PC-9 (cell line): ENCODE measurements at regions of chr1 and their contacts with region 1.

Region 1: DNA sequence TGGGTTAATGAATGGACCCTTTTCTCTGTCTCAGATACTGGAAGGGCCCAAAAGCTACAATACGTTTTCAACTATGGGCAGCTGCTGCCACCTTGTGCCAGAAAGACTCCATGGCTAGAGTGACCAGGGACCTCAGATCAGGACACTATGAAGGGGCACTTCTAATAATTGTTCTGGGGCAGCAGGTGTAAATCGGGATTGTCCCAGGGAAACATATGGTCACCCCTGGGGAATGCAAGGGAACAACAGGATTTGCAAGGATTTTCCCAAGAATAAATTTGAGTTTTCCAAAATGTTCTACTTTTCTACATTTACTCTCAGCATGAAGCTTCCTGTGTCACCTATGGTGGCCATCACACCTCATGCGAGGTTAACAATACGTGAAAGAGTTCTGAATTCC is 12.0 kb upstream of the FCAMR start:
- DNase-seq: peak; percentile 46 to 51
- H3K4me3 ChIP-seq: no peak overlapping the region
- H3K27ac ChIP-seq: no peak overlapping the region
- H3K4me1 ChIP-seq: no peaks in the 10 kb centered on the region
- H3K27me3 ChIP-seq: no peaks in the 10 kb centered on the region
- CTCF ChIP-seq: peak; percentile 85

Region 2: DNA sequence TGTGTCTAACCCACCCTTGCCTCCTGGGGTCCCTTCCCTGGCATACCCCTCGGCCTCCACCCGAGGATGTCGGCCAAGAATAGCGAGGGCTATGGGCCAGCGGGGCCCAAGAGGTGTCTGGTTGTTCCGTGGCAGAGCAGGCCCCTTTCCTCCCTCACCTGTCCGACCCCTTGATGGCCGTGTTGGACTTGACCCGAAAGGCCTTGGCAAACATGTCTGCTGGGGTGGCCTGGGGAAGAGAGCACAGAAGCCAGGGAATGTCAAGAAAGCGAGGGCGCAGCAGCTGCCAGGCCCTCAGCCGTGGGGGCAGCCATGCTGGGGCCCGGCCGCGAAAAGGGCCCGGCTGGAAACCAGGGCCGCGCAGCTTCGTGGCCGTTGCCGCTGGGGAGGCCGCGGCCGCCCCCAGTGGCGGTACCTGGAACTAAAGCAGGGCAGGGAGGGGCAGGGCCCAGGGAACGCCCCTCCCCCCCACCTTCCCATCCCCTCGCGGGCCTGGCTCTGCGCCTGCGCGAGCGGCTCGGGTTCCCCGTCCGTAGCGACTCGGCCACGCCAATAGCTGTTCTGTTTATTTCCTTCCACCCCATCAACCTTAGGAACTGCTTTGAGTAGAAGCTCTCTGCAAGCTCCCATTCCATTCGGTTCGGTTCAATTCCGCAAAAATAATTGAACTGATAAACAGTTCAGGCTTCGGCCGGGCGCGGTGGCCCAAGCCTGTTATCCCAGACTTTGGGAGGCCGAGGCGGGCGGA is 369.9 kb before region 1 on chr1 and contains the start of gene EIF2D:
- CTCF ChIA-PET with region 1: interaction called, 3 read pairs
- POLR2A ChIA-PET with region 1: no interaction called
- intact Hi-C with region 1: loop called (anchors 2 kb)
- DNase-seq: peak; percentile 77 to 97
- H3K4me3 ChIP-seq: peak within 1 kb of the TSS; percentile 76
- H3K27ac ChIP-seq: peak within 1 kb of the TSS; percentile 59
- H3K4me1 ChIP-seq: peaks cover 8% of the 10 kb centered on the region
- H3K27me3 ChIP-seq: no peaks in the 10 kb centered on the region
- CTCF ChIP-seq: peak; percentile 93
- total RNA-seq, gene EIF2D: 57.3 and 59.0 TPM in 2 replicates

Region 3: DNA sequence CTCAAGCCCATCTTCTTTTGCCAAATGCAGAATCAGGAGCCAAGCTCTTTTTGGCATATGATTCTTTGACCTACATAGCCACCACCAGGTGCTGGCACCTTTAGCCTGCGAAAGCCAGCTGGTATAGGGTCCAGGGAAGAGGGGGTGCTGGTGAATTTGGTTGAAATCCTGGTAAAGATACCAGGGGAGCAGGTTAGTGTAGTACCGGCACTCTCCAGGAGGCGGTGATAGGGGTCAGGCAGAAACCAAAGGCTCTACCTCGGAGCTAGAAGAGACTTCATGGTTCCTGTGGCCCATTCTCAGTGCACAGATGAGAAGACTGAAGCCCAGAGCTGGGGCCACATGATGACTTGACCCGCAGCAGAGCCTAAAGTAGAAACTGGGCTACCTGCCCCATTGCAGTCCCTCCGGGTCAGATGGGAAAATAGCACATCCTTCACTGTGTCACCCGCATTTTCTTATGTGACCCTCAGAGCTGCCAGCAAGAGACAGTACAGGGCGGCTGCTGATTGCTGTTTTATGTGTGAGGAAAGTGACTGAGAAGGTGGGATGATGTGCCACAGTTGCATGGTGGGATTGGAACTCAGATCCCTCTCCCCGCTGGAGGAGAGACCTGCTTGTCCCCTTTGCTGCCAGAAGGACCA is 247.6 kb before region 1 on chr1:
- CTCF ChIA-PET with region 1: no interaction called
- POLR2A ChIA-PET with region 1: no interaction called
- intact Hi-C with region 1: loop called (anchors 1 kb)
- DNase-seq: peak in 1 of 2 experiments; percentile 37
- H3K4me3 ChIP-seq: no peak overlapping the region
- H3K27ac ChIP-seq: no peak overlapping the region
- H3K4me1 ChIP-seq: no peaks in the 10 kb centered on the region
- H3K27me3 ChIP-seq: no peaks in the 10 kb centered on the region
- CTCF ChIP-seq: peak; percentile 89

Region 4: GRCh38 chr1:207017615-207018559 is 35.7 kb after region 1 on chr1:
- CTCF ChIA-PET with region 1: interaction called, 4 read pairs
- POLR2A ChIA-PET with region 1: no interaction called
- intact Hi-C with region 1: loop called (anchors 1 kb)
- DNase-seq: no peak
- H3K4me3 ChIP-seq: no peak overlapping the region
- H3K27ac ChIP-seq: no peak overlapping the region
- H3K4me1 ChIP-seq: peaks cover 35% of the 10 kb centered on the region
- H3K27me3 ChIP-seq: no peaks in the 10 kb centered on the region
- CTCF ChIP-seq: no peak

Region 5: GRCh38 chr1:207067665-207068064 is 85.4 kb after region 1 on chr1:
- CTCF ChIA-PET with region 1: interaction called, 10 read pairs
- POLR2A ChIA-PET with region 1: no interaction called
- intact Hi-C with region 1: no loop called
- DNase-seq: no peak
- H3K4me3 ChIP-seq: no peak overlapping the region
- H3K27ac ChIP-seq: no peak overlapping the region
- H3K4me1 ChIP-seq: no peaks in the 10 kb centered on the region
- H3K27me3 ChIP-seq: no peaks in the 10 kb centered on the region
- CTCF ChIP-seq: no peak

Region 6: DNA sequence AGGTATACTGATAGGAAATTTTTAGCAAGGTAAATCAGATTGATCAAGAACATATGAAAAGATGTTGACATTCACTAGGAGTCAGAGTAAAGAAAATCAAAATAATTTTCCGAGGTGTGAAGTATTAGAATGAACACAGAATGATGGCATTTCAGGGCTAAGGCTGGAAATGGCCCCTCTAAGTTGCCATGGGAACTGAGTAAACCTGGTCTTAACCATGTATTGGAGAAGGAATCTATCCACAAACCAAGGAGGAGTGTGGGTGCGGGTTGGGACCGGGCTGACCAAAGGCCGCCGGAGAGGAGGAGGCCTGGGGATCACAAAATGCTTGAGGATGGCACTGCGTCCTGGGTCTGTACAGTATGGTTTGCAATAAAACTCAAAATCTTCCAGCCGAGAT is 392.7 kb after region 1 on chr1:
- CTCF ChIA-PET with region 1: no interaction called
- POLR2A ChIA-PET with region 1: no interaction called
- intact Hi-C with region 1: no loop called
- DNase-seq: no peak
- H3K4me3 ChIP-seq: no peak overlapping the region
- H3K27ac ChIP-seq: no peak overlapping the region
- H3K4me1 ChIP-seq: no peaks in the 10 kb centered on the region
- H3K27me3 ChIP-seq: no peaks in the 10 kb centered on the region
- CTCF ChIP-seq: no peak